Cardiac septum (tissue), 1 donor: ENCODE measurements at regions of chr11 and their contacts with region 1.

Region 1: DNA sequence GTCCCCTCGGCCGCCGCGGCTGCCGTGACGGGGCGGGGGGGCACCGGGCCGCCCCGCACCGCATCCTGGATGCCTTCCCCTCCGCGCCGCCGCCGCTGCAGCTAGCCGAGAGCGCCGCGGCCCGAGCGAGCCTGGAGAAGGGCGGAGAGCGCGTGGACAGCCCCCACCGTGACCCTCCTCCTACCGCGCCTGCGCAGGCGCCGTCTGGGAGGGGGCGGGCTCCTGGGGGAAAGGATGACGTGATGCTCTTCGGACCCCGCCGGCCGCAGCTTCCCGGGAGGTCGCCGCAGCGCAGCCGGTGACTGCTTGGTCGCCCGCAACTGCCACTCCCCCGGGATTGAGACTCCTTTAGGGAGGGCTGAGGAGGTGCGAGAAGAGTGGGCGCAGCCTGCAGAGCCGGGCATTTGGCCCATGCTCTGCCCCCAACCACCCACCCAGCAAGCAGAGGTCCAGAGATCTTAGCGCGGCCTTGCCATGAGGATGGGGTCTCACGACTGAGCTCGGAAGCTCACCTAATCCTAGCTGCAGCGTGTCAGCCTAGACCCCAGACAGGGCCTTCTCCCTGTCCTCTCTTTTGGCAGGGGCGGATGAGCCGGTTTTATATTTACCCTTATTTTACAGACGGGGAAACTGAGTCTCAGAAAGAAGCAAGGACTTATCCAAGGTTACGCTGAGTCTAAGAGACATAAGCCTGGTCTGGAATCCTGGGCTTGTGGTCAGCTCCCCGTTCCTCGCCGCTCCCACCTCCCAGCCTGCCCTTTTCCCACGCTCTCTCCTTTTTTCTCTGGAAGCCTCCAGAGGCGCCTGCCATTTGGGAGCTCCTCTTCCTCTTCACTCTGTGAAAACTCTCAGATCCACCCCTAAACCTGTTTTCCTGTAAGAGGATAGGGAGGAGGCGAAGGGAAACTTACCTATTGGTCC is at the start of gene DENND5A:
- DNase-seq: peak; percentile 94
- total RNA-seq, gene DENND5A: 132 TPM

Region 2: DNA sequence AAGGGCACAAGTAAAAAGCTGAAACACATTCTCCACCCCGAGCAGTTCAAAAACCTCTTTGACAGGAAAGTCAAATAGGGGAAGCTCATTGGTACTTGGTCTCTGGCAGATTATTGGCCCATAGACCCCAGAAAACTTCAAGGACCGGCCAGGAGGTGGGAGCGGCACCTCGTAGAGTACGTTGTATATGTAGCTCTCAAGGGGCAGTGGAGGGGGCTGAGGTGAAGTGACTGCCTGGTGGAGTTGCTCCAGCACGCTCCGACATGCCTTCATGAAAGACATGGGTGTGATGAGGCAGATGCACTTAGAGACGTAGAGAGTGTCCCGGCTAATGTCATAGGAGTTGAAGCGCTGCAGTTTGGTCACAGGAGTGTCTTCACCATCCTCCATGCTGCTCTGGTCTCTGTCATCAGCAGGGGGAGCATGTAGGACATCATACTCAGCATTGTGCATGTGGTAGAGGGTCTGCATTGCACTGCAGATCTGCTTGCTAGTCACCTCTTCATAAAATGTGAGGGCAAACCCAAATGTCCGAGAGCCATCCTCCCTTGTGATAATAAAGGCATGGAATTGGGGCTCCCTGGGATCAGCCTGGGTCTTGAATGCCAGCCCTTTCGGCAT is 61.7 kb before region 1 on chr11:
- intact Hi-C with region 1: loop called (anchors 5 kb)
- DNase-seq: no peak

Region 3: GRCh38 chr11:9314291-9315036 is 49.0 kb after region 1 on chr11 and contains the start of gene TMEM41B:
- intact Hi-C with region 1: loop called (anchors 5 kb)
- DNase-seq: peak; percentile 98
- total RNA-seq, gene TMEM41B: 18.2 TPM

Region 4: GRCh38 chr11:9460322-9461067 is 195.0 kb after region 1 on chr11 and contains the start of gene ZNF143:
- intact Hi-C with region 1: loop called (anchors 2 kb)
- DNase-seq: peak; percentile 100
- total RNA-seq, gene ZNF143: 22.6 TPM